GM12878 (cell line): ENCODE measurements at regions of chr11 and their contacts with region 1.

Region 1: DNA sequence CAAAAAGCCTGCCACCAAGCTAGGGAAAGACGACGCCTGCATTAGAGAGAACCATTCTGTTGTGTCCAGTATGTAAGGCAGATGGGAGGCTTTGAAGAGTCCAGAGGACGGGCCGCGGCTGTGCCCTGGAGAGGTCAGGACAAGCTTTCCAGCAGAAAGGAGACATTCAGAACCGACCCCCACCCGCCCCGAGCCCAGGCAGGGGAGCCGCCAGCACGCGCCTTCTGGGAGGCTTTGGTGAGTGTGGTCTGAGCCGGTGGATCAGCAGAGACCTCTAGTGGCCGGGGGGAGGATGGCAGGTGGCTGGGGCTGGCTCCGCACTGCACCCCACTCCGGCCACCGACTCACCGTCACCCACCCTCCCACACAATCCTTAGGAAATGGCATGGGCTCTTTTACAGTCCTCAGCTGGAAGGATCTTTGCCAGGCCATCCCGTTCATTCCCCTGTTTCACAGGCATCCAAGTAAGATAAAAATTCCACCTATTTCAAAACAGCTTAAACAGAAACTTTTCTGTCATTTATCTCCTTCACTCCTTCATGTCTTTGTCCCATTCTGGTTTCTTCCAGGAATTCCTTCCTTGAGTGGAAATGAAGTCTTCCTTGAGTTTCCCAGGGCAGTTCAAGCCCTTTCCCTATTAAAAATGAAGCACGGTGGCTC is 91.2 kb downstream of the FEZ1 start:
- DNase-seq: no peak
- ATAC-seq: peak; percentile 97
- H3K4me3 ChIP-seq: no peak overlapping the region
- H3K27ac ChIP-seq: no peak overlapping the region
- H3K4me1 ChIP-seq: no peaks in the 10 kb centered on the region
- H3K27me3 ChIP-seq: peaks cover 4 to 12% of the 10 kb centered on the region in 2 experiments
- CTCF ChIP-seq: peak; percentile 89 to 98 (median 92)
- EP300 ChIP-seq: no peak
- POLR2A ChIP-seq: no peak
- RAD21 ChIP-seq: peak; percentile 75

Region 2: DNA sequence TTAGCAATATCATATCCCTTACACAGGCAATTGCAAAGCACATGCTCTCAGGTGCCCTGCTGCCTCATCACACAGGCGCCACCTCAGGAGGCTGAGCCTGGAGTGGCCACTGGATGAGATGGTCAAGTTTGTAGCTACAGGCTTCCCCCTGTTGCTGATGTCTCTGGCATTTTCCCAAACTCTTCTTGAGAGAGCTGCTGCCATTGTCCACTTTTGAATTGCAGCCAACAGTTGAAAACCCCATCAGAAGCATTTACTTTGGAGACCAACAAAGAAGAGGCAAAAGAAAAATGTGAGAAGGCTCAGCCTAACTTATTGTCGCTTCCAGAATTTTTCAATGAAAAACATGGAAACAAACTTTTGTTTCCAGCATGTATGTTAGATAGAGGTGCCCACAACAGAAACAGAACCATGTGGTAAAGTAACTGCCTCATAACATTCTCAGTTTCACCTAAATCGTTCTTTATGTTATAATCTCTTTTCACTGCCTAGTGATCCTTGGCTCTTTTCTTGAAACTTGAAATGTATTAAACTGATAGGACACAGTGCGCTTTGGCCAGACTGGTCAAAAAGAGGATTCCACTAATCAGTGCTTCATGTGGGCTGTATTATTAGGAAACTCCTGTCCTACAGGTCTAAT is 911.8 kb before region 1 on chr11:
- CTCF ChIA-PET with region 1: no interaction called
- POLR2A ChIA-PET with region 1: no interaction called
- RAD21 ChIA-PET with region 1: no interaction called
- SMC1A ChIA-PET with region 1: no interaction called
- in situ Hi-C with region 1: no loop called
- intact Hi-C with region 1: no loop called
- DNase-seq: no peak
- ATAC-seq: no peak
- H3K4me3 ChIP-seq: no peak overlapping the region
- H3K27ac ChIP-seq: no peak overlapping the region
- H3K4me1 ChIP-seq: no peaks in the 10 kb centered on the region
- H3K27me3 ChIP-seq: no peaks in the 10 kb centered on the region
- CTCF ChIP-seq: no peak
- EP300 ChIP-seq: no peak
- POLR2A ChIP-seq: no peak
- RAD21 ChIP-seq: no peak

Region 3: DNA sequence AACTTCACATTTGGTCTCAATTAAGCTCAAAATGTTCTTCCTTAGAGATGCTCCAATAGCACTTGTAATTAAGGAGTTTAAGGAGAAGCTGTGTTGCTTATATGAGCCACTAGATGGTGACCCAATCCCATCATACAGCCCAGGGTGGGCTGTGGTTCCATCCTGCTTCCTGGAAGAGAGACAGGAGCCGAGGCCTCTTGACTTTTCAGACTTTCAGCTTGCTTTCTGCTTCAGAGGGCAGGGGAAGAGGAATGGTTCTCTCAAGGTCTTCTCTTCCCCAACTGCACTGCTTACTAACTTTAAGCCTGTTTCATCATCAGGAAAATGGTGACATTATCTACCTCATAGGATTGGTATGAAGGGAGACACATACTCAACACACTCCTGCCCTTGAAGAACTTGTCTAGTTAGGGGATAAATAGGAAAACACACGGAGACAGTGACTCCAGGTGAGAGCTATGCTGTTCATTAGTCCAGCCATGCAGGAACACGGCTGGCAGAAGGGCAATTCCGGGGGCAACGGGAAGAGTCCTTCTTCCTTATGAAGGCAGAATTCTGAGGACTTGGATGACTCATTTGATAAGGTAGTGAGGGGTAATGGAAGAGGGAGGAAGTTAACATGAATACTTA is 313.5 kb before region 1 on chr11:
- CTCF ChIA-PET with region 1: interaction called, 15 read pairs
- POLR2A ChIA-PET with region 1: no interaction called
- RAD21 ChIA-PET with region 1: interaction called, 9 read pairs
- SMC1A ChIA-PET with region 1: interaction called, 4 read pairs
- in situ Hi-C with region 1: no loop called
- intact Hi-C with region 1: loop called (anchors 5 kb)
- DNase-seq: no peak
- ATAC-seq: peak; percentile 86
- H3K4me3 ChIP-seq: no peak overlapping the region
- H3K27ac ChIP-seq: no peak overlapping the region
- H3K4me1 ChIP-seq: no peaks in the 10 kb centered on the region
- H3K27me3 ChIP-seq: no peaks in the 10 kb centered on the region
- CTCF ChIP-seq: peak; percentile 43 to 66 (median 54); a peak in 4 of 6 replicates
- EP300 ChIP-seq: no peak
- POLR2A ChIP-seq: no peak
- RAD21 ChIP-seq: peak; percentile 80

Region 4: GRCh38 chr11:125245299-125245698 is 159.6 kb before region 1 on chr11:
- CTCF ChIA-PET with region 1: no interaction called
- POLR2A ChIA-PET with region 1: no interaction called
- RAD21 ChIA-PET with region 1: no interaction called
- SMC1A ChIA-PET with region 1: no interaction called
- in situ Hi-C with region 1: no loop called
- intact Hi-C with region 1: no loop called
- DNase-seq: no peak
- ATAC-seq: no peak
- H3K4me3 ChIP-seq: no peak overlapping the region
- H3K27ac ChIP-seq: no peak overlapping the region
- H3K4me1 ChIP-seq: no peaks in the 10 kb centered on the region
- H3K27me3 ChIP-seq: peaks cover 0 to 11% of the 10 kb centered on the region in 2 experiments; a peak in 3 of 4 replicates
- CTCF ChIP-seq: no peak
- EP300 ChIP-seq: no peak
- POLR2A ChIP-seq: no peak
- RAD21 ChIP-seq: no peak

Region 5: DNA sequence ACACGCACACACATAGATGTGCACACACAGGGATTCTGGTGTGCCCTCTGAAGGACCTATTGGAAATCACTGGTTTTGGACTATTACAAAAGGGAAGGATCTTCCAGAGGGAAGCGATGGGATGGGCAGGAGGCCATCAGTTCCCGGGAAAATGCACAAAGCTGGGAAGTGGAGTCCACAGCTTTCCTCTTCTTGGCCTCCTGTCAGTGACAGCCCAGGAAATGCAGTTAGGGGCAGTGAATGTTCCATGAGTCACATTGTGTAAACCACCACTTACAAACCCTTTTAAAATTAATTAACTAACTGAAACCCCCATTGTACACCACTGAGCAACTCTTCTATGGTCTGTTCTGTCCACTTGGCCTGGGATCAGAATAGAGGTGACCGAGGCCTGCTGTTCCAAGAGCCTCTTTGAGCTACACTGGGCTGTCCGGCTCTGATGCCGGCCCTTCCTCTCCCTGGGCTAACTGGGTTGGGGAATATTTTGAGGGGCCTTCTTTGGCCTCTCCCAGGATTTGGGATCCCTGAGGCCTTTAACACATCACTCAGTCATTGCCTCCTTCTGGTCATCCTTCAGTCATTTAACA is 46.6 kb before region 1 on chr11:
- CTCF ChIA-PET with region 1: interaction called, 31 read pairs
- POLR2A ChIA-PET with region 1: interaction called, 9 read pairs
- RAD21 ChIA-PET with region 1: interaction called, 37 read pairs
- SMC1A ChIA-PET with region 1: interaction called, 14 read pairs
- in situ Hi-C with region 1: no loop called
- intact Hi-C with region 1: no loop called
- DNase-seq: no peak
- ATAC-seq: peak; percentile 23; the same call in 2 of the 3 replicates
- H3K4me3 ChIP-seq: no peak overlapping the region
- H3K27ac ChIP-seq: no peak overlapping the region
- H3K4me1 ChIP-seq: no peaks in the 10 kb centered on the region; the same call in 1 of the 2 replicates
- H3K27me3 ChIP-seq: peaks cover 0 to 1% of the 10 kb centered on the region in 2 experiments; a peak in 2 of 4 replicates
- CTCF ChIP-seq: no peak
- EP300 ChIP-seq: no peak
- POLR2A ChIP-seq: no peak
- RAD21 ChIP-seq: no peak

Region 6: GRCh38 chr11:125376117-125376516 is 28.8 kb before region 1 on chr11:
- CTCF ChIA-PET with region 1: interaction called, 26 read pairs
- POLR2A ChIA-PET with region 1: interaction called, 11 read pairs
- RAD21 ChIA-PET with region 1: interaction called, 37 read pairs
- SMC1A ChIA-PET with region 1: interaction called, 52 read pairs
- in situ Hi-C with region 1: no loop called
- intact Hi-C with region 1: loop called (anchors 2 kb)
- DNase-seq: no peak
- ATAC-seq: peak; percentile 45
- H3K4me3 ChIP-seq: no peak overlapping the region
- H3K27ac ChIP-seq: no peak overlapping the region
- H3K4me1 ChIP-seq: no peaks in the 10 kb centered on the region
- H3K27me3 ChIP-seq: peaks cover 0 to 1% of the 10 kb centered on the region in 2 experiments; a peak in 3 of 4 replicates
- CTCF ChIP-seq: no peak
- EP300 ChIP-seq: no peak
- POLR2A ChIP-seq: no peak
- RAD21 ChIP-seq: no peak

Region 7: DNA sequence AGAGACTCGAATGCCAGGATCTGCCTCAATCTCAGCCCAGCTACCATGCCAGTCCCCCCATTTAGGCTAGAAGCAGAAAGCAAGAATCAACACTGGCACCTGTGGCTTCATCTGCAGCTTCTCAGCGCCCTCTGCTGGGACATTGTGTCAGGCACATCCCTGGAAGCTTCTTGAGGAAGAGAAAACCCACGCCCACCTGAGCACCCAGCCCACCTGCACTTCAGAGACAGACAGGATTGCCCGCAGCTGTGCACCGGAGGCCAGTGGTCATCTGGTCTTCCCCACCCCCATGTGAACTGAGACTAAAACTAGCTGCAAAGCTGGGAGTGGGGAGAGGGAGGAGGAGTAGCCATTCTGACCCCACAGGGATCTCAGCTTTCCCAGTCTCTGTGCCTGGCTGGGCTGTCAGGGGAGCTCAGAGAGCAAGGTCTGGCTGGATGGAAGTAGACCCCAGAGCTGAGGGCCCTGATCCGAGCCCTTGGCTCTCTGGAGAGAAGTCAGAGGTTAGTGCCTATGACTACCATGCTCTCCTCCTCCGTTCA is 24.3 kb after region 1 on chr11:
- CTCF ChIA-PET with region 1: interaction called, 40 read pairs
- POLR2A ChIA-PET with region 1: no interaction called
- RAD21 ChIA-PET with region 1: interaction called, 3 read pairs
- SMC1A ChIA-PET with region 1: interaction called, 4 read pairs
- in situ Hi-C with region 1: no loop called
- intact Hi-C with region 1: no loop called
- DNase-seq: no peak
- ATAC-seq: peak; percentile 83
- H3K4me3 ChIP-seq: no peak overlapping the region
- H3K27ac ChIP-seq: no peak overlapping the region
- H3K4me1 ChIP-seq: no peaks in the 10 kb centered on the region
- H3K27me3 ChIP-seq: peaks cover 0 to 3% of the 10 kb centered on the region in 2 experiments; a peak in 2 of 4 replicates
- CTCF ChIP-seq: peak; percentile 76 to 87 (median 83)
- EP300 ChIP-seq: no peak
- POLR2A ChIP-seq: no peak
- RAD21 ChIP-seq: peak; percentile 57